GM12878 (cell line): ENCODE measurements at regions of chr11 and their contacts with region 1.

Region 1: GRCh38 chr11:19951558-19952115 is 208.6 kb downstream of the DBX1 start:
- DNase-seq: peak; percentile 49
- ATAC-seq: peak; percentile 90
- H3K4me3 ChIP-seq: no peak overlapping the region
- H3K27ac ChIP-seq: no peak overlapping the region
- H3K4me1 ChIP-seq: peaks cover 7% of the 10 kb centered on the region
- H3K27me3 ChIP-seq: no peaks in the 10 kb centered on the region
- CTCF ChIP-seq: peak; percentile 44 to 55 (median 54)
- EP300 ChIP-seq: 0 out of 4 replicates have a peak, but pooled peaks of 1 of the 2 experiments have one; percentile 32
- POLR2A ChIP-seq: no peak
- RAD21 ChIP-seq: peak; percentile 70

Region 2: GRCh38 chr11:19868281-19868821 is 83.3 kb before region 1 on chr11:
- CTCF ChIA-PET with region 1: no interaction called
- POLR2A ChIA-PET with region 1: no interaction called
- RAD21 ChIA-PET with region 1: no interaction called
- SMC1A ChIA-PET with region 1: no interaction called
- in situ Hi-C with region 1: no loop called
- intact Hi-C with region 1: no loop called
- DNase-seq: no peak
- ATAC-seq: no peak
- H3K4me3 ChIP-seq: no peak overlapping the region
- H3K27ac ChIP-seq: no peak overlapping the region
- H3K4me1 ChIP-seq: no peaks in the 10 kb centered on the region
- H3K27me3 ChIP-seq: no peaks in the 10 kb centered on the region
- CTCF ChIP-seq: no peak
- EP300 ChIP-seq: no peak
- POLR2A ChIP-seq: no peak
- RAD21 ChIP-seq: no peak

Region 3: DNA sequence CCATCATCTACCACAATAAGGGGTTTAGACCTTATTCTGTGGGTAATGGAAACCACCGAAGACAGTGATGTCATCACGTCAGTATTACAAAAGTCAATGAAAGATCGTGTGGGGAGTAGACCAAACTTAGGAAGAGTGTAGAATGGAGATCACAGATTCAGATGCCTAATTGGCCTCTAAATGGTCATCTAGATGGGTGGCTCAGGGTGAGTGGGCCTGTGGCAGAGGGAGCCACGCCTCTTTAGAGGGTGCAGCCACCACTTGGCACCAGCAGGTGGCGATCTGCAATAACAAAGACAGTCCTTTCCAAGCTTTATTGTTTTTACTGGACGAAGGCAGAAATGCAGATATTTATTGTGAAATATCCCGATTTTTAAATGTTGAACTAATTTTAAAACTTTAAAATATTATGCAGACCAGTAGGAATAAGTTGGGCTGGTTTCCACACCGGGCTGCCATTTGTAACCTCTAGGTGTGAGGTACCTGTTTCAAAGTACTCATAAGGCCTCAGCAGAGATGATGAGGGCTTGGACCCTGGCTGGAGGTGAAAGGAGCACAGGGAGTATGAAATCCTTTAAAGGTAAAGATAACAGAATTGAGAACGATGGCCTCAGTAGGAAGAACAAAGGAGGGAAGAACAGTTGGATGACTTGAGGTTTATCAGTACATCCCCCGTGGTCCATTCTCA is 13.3 kb before region 1 on chr11:
- CTCF ChIA-PET with region 1: interaction called, 34 read pairs
- POLR2A ChIA-PET with region 1: no interaction called
- RAD21 ChIA-PET with region 1: interaction called, 10 read pairs
- SMC1A ChIA-PET with region 1: interaction called, 18 read pairs
- in situ Hi-C with region 1: no loop called
- intact Hi-C with region 1: no loop called
- DNase-seq: no peak
- ATAC-seq: peak; percentile 87
- H3K4me3 ChIP-seq: no peak overlapping the region
- H3K27ac ChIP-seq: no peak overlapping the region
- H3K4me1 ChIP-seq: peaks cover 4% of the 10 kb centered on the region; the same call in 1 of the 2 replicates
- H3K27me3 ChIP-seq: no peaks in the 10 kb centered on the region
- CTCF ChIP-seq: peak; percentile 64 to 93 (median 83)
- EP300 ChIP-seq: no peak
- POLR2A ChIP-seq: no peak
- RAD21 ChIP-seq: peak; percentile 53

Region 4: GRCh38 chr11:19962801-19963175 is 11.2 kb after region 1 on chr11:
- CTCF ChIA-PET with region 1: interaction called, 27 read pairs
- POLR2A ChIA-PET with region 1: no interaction called
- RAD21 ChIA-PET with region 1: interaction called, 4 read pairs
- SMC1A ChIA-PET with region 1: interaction called, 8 read pairs
- in situ Hi-C with region 1: no loop called
- intact Hi-C with region 1: no loop called
- DNase-seq: no peak
- ATAC-seq: no peak
- H3K4me3 ChIP-seq: no peak overlapping the region
- H3K27ac ChIP-seq: no peak overlapping the region
- H3K4me1 ChIP-seq: peaks cover 2% of the 10 kb centered on the region; the same call in 1 of the 2 replicates
- H3K27me3 ChIP-seq: no peaks in the 10 kb centered on the region; a peak in 1 of 4 replicates
- CTCF ChIP-seq: no peak
- EP300 ChIP-seq: no peak
- POLR2A ChIP-seq: no peak
- RAD21 ChIP-seq: no peak

Region 5: GRCh38 chr11:19978668-19979518 is 27.3 kb after region 1 on chr11:
- CTCF ChIA-PET with region 1: interaction called, 4 read pairs
- POLR2A ChIA-PET with region 1: interaction called, 3 read pairs
- RAD21 ChIA-PET with region 1: interaction called, 13 read pairs
- SMC1A ChIA-PET with region 1: interaction called, 15 read pairs
- in situ Hi-C with region 1: no loop called
- intact Hi-C with region 1: no loop called
- DNase-seq: peak; percentile 40
- ATAC-seq: peak; percentile 91
- H3K4me3 ChIP-seq: no peak overlapping the region
- H3K27ac ChIP-seq: no peak overlapping the region
- H3K4me1 ChIP-seq: peaks cover 12% of the 10 kb centered on the region
- H3K27me3 ChIP-seq: no peaks in the 10 kb centered on the region
- CTCF ChIP-seq: no peak
- EP300 ChIP-seq: 0 out of 4 replicates have a peak, but pooled peaks of 1 of the 2 experiments have one; percentile 10
- POLR2A ChIP-seq: no peak
- RAD21 ChIP-seq: no peak

Region 6: GRCh38 chr11:20105427-20105826 is 153.8 kb after region 1 on chr11:
- CTCF ChIA-PET with region 1: interaction called, 111 read pairs
- POLR2A ChIA-PET with region 1: no interaction called
- RAD21 ChIA-PET with region 1: no interaction called
- SMC1A ChIA-PET with region 1: interaction called, 4 read pairs
- in situ Hi-C with region 1: loop called (anchors 5 kb)
- intact Hi-C with region 1: no loop called
- DNase-seq: no peak
- ATAC-seq: no peak
- H3K4me3 ChIP-seq: no peak overlapping the region
- H3K27ac ChIP-seq: no peak overlapping the region
- H3K4me1 ChIP-seq: no peaks in the 10 kb centered on the region
- H3K27me3 ChIP-seq: no peaks in the 10 kb centered on the region; a peak in 1 of 4 replicates
- CTCF ChIP-seq: no peak
- EP300 ChIP-seq: no peak
- POLR2A ChIP-seq: no peak
- RAD21 ChIP-seq: no peak

Region 7: DNA sequence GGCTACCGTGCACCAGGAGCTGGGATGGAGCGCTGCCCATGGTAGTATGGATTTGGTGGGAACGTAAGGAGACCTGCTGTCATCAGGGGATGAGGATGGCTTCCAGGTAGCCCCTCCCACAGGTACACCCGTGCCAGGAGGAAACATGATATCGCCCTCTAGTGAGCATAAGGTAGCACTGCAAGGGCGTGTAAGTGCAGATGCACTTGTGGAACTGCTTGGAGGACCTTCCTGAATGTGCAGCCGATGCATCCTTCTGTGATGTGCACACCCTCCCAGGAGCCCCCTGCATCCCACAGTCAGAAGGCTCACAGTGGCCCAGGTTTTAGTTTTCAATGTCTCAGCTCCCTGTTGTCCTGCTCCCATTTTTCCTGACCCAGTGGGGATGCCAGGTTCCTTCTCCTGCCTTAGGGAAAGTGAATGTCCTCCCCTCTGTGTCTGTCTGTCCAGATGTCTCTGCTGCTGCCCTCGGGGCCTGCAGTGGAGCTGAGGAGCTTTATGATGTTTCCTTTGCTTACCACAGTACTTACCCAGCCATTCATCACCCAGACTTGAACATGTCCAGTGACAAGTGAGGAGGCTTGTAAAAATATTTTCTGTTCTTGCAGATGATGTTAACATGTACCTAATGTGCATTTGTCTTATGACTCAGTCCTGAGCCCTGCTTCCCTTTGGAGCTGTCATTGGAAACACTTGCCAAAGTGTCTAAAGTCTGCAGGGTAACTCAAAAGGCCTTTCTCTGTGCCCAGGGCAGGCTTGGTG is 159.5 kb after region 1 on chr11:
- CTCF ChIA-PET with region 1: interaction called, 111 read pairs
- POLR2A ChIA-PET with region 1: no interaction called
- RAD21 ChIA-PET with region 1: interaction called, 20 read pairs
- SMC1A ChIA-PET with region 1: interaction called, 8 read pairs
- in situ Hi-C with region 1: loop called (anchors 5 kb)
- intact Hi-C with region 1: loop called (anchors 1 kb)
- DNase-seq: peak; percentile 8
- ATAC-seq: peak; percentile 97
- H3K4me3 ChIP-seq: no peak overlapping the region
- H3K27ac ChIP-seq: no peak overlapping the region
- H3K4me1 ChIP-seq: no peaks in the 10 kb centered on the region; the same call in 1 of the 2 replicates
- H3K27me3 ChIP-seq: no peaks in the 10 kb centered on the region
- CTCF ChIP-seq: peak; percentile 90 to 94 (median 94); a peak in 5 of 6 replicates
- EP300 ChIP-seq: no peak
- POLR2A ChIP-seq: no peak
- RAD21 ChIP-seq: peak; percentile 83

Region 8: GRCh38 chr11:20355221-20356219 is 403.9 kb after region 1 on chr11:
- CTCF ChIA-PET with region 1: interaction called, 3 read pairs
- POLR2A ChIA-PET with region 1: no interaction called
- RAD21 ChIA-PET with region 1: no interaction called
- SMC1A ChIA-PET with region 1: interaction called, 4 read pairs
- in situ Hi-C with region 1: loop called (anchors 10 kb)
- intact Hi-C with region 1: loop called (anchors 10 kb)
- DNase-seq: no peak
- ATAC-seq: peak; percentile 95
- H3K4me3 ChIP-seq: no peak overlapping the region
- H3K27ac ChIP-seq: no peak overlapping the region
- H3K4me1 ChIP-seq: no peaks in the 10 kb centered on the region
- H3K27me3 ChIP-seq: no peaks in the 10 kb centered on the region
- CTCF ChIP-seq: peak; percentile 45 to 57 (median 50)
- EP300 ChIP-seq: no peak
- POLR2A ChIP-seq: no peak
- RAD21 ChIP-seq: peak; percentile 27; the same call in 1 of the 2 replicates